Cardiac septum (tissue), 1 donor: ENCODE measurements at regions of chr17 and their contacts with region 1.

Region 1: DNA sequence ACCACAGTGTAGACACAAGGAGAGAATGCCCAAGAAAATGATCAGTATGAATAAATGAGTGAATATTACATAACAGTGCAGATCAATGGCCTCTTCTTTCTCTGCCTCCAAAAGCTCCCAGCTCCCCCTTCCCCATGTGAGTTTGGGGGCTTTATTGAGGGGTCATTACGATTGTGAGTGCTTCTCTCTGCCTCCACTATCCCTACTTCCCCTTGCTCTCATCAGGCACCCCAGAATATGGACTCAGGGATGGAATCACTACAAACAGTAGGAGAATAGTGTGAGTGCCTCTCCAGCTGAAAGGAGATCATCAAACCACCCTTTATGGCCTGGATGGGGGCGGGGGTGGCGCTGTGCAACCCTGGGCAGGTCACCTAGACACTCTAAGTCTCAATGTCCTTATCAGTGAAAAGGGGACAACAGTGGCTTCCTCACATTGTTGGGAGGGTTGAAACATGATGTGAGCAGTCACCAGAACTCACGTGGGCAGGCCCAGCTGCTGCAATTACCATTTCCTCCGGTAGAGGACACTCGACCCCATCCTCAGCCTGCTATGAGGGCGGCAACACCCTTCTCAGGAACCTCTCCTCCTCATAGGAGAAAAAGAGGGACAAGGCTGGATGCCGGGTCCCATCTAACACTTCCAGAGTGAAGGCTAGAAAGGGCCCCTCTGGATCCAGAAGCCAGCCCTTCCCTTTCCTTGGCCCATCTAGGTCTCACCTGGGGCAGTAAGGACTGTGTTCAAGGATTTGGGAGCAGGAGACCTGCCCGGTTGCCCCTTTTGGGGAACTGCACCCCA is 2.1 kb upstream of the EPOP start:
- DNase-seq: peak; percentile 94

Region 2: GRCh38 chr17:38693700-38694329 is 16.9 kb after region 1 on chr17:
- intact Hi-C with region 1: loop called (anchors 2 kb)
- DNase-seq: peak; percentile 92

Region 3: DNA sequence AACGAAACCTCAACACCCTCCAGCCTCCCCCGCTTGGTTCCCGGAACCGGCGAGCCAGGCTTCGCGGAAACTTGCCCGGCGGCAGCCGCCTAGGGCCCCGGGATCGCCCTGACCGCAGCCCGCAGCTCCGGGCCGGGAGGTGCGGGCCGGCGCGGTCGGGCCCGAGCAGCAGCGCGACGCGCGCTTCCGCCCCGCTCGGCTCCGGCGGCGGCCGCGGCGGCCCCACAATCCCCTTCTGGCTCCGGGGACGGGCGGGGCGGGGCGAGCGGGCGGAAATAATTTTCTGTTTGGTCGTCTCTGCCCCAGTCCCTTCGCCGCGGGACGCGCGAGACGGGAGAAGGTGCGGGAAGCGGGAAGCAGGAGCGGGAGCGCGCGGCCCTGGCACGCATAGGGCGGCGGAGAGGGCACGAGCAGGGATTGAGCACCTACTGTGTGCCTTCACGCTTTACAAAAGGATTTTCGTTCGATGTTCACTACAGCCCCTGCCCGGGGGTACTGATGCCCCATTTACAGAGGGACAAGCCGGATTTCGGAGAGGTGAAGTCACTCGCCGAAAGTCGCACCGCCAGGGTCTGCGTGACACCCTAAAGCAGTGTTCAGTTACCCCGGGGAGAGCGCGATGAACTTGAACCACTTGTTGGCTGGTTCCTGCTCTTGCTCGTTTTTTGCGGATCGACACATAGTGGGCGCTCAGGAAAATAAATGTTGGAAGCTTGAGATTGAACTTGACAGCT is 25.4 kb after region 1 on chr17:
- intact Hi-C with region 1: loop called (anchors 2 kb)
- DNase-seq: peak; percentile 94

Region 4: DNA sequence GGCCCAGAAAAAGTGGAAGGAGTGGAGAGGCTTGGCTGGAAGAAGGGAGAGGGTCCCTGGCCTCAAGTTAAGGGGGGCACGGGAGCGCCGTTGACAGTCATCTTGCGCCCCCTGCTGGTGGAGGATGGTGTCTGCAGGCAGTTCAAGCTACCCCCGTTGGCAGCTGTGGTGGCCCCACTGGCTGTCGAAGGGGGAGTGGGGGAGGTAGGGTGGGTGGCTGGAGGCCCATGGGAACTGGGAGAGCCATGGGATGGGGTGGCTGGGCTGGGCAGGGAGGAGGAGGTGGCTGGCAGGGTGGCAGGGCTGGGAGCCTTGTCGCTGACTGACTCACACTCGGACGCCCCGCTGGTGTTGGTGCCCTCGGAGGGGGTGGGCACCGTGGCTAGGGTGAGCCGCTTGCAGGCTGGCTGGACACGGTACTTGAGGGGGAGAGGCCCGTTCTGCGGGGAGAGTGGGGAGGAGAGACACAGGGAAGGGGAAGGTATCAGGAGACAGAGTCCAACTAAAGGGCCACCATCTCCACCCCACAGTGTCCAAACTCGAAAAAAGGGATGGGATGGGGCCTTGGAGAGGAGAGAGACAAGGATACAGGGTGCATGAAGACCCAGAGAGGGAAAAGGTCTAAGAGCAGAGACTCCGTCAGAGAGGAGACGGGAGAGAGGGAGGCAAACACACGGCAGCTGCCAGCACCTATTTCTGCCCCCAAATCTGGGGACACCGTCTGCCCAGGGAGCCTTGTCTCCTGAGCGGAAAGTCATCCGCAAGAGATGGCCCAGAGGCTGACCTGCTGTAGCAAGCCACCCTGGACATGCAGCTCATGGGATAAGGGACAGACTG is 58.5 kb after region 1 on chr17:
- intact Hi-C with region 1: loop called (anchors 1 kb)
- DNase-seq: peak; percentile 86